ENCODE measurements at regions of chr11 and their contacts with region 1.

Region 1: DNA sequence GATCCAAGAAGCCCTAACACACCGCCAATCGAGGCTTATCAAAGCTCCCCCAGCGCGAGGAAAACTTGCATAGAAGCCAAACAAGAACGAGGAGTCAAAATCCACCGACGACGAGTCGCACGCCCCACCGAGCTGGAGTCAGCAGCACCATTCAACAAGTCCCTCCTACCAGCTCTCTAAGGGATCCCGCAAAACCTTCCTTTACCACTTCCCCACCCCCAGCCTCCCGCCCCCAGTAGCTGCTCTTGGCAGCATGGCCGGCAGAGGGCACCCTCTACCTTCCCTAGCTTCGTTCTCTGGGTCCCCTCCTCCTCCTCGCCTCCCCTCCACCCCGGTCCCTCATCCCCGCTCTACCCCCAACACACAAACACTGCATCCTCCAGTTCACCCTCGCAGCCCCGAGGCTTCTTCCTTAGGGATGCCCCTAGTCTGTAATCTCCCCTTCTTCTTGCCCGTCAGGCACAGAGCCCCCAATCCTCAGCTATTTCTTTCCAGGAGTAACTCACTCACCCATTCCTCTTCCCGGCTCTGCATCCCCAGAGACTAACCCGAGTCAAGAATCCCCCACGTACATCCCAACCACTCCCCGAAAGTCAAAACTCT is 1.3 kb downstream of the BDNF start:
- DNase-seq: peak; percentile 89 to 91
- H3K4me3 ChIP-seq: peak overlapping the region; percentile 70
- H3K4me3 Mint-ChIP-seq: peak overlapping the region; percentile 90
- H3K27ac Mint-ChIP-seq: peak overlapping the region; percentile 74
- H3K4me1 ChIP-seq: peaks cover 17% of the 10 kb centered on the region
- H3K4me1 Mint-ChIP-seq: peaks cover 20% of the 10 kb centered on the region
- H3K27me3 ChIP-seq: no peaks in the 10 kb centered on the region
- H3K27me3 Mint-ChIP-seq: no peaks in the 10 kb centered on the region
- CTCF ChIP-seq: peak; percentile 87 to 97

Region 2: GRCh38 chr11:27524155-27524554 is 174.8 kb before region 1 on chr11:
- CTCF ChIA-PET with region 1: no interaction called
- POLR2A ChIA-PET with region 1: no interaction called
- intact Hi-C with region 1: loop called (anchors 10 kb)
- DNase-seq: peak; percentile 30 to 43
- H3K4me3 ChIP-seq: no peak overlapping the region
- H3K4me3 Mint-ChIP-seq: no peak overlapping the region
- H3K27ac Mint-ChIP-seq: no peak overlapping the region
- H3K4me1 ChIP-seq: no peaks in the 10 kb centered on the region
- H3K4me1 Mint-ChIP-seq: no peaks in the 10 kb centered on the region
- H3K27me3 ChIP-seq: no peaks in the 10 kb centered on the region; the same call in 1 of the 2 replicates
- H3K27me3 Mint-ChIP-seq: peaks cover 8% of the 10 kb centered on the region
- CTCF ChIP-seq: peak; percentile 21 to 36

Region 3: DNA sequence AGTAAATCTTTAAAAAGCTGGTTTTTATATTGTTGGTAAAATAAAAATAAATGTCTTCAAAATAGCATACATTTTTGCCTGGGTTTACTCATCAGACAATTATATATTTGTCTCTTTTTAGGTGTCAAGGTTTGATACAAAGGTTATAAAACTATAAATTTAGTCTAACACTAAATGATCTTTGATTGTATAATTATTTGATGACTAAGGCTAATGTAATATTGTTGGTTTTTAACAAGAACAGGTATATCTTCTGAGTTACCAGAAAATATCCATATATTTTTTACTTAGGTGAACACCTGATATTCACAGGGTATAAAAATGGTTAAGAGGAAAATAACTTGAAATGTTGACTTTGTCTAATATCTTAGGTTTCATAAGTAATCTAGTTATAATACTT is 304.6 kb after region 1 on chr11:
- CTCF ChIA-PET with region 1: no interaction called
- POLR2A ChIA-PET with region 1: no interaction called
- intact Hi-C with region 1: no loop called
- DNase-seq: no peak
- H3K4me3 ChIP-seq: no peak overlapping the region
- H3K4me3 Mint-ChIP-seq: no peak overlapping the region
- H3K27ac Mint-ChIP-seq: no peak overlapping the region
- H3K4me1 ChIP-seq: no peaks in the 10 kb centered on the region
- H3K4me1 Mint-ChIP-seq: no peaks in the 10 kb centered on the region
- H3K27me3 ChIP-seq: no peaks in the 10 kb centered on the region
- H3K27me3 Mint-ChIP-seq: no peaks in the 10 kb centered on the region
- CTCF ChIP-seq: no peak

Region 4: DNA sequence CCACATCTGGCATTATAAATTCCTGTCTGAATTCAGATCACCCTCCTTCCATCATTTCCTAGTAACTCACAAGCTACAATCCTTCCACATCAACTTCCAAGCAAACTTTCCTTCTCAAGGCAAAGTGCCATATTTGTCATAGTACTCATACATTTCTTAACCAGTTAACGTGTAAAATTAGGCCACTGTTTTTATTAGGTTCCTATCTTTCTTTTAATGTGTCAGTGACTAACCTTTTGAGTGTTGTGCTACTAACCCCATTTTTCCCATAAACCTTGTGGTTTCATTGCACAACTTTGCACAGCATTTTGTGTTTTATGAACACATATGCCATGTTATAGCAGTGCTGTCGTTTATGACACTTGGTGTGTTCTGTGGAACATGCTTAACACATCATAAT is 318.8 kb after region 1 on chr11:
- CTCF ChIA-PET with region 1: interaction called, 3 read pairs
- POLR2A ChIA-PET with region 1: no interaction called
- intact Hi-C with region 1: loop called (anchors 5 kb)
- DNase-seq: no peak
- H3K4me3 ChIP-seq: no peak overlapping the region
- H3K4me3 Mint-ChIP-seq: no peak overlapping the region
- H3K27ac Mint-ChIP-seq: no peak overlapping the region
- H3K4me1 ChIP-seq: no peaks in the 10 kb centered on the region
- H3K4me1 Mint-ChIP-seq: no peaks in the 10 kb centered on the region
- H3K27me3 ChIP-seq: no peaks in the 10 kb centered on the region
- H3K27me3 Mint-ChIP-seq: no peaks in the 10 kb centered on the region
- CTCF ChIP-seq: no peak

Region 5: GRCh38 chr11:28529540-28530410 is 830.8 kb after region 1 on chr11:
- CTCF ChIA-PET with region 1: interaction called, 15 read pairs
- POLR2A ChIA-PET with region 1: no interaction called
- intact Hi-C with region 1: loop called (anchors 1 kb)
- DNase-seq: peak in 1 of 2 experiments; percentile 45
- H3K4me3 ChIP-seq: no peak overlapping the region
- H3K4me3 Mint-ChIP-seq: no peak overlapping the region
- H3K27ac Mint-ChIP-seq: no peak overlapping the region
- H3K4me1 ChIP-seq: no peaks in the 10 kb centered on the region
- H3K4me1 Mint-ChIP-seq: no peaks in the 10 kb centered on the region
- H3K27me3 ChIP-seq: no peaks in the 10 kb centered on the region
- H3K27me3 Mint-ChIP-seq: no peaks in the 10 kb centered on the region
- CTCF ChIP-seq: peak; percentile 39 to 47

Region 6: GRCh38 chr11:28858076-28858475 is 1159.1 kb after region 1 on chr11:
- CTCF ChIA-PET with region 1: interaction called, 10 read pairs
- POLR2A ChIA-PET with region 1: no interaction called
- intact Hi-C with region 1: no loop called
- DNase-seq: no peak
- H3K4me3 ChIP-seq: no peak overlapping the region
- H3K4me3 Mint-ChIP-seq: no peak overlapping the region
- H3K27ac Mint-ChIP-seq: no peak overlapping the region
- H3K4me1 ChIP-seq: no peaks in the 10 kb centered on the region
- H3K4me1 Mint-ChIP-seq: peaks cover 7% of the 10 kb centered on the region
- H3K27me3 ChIP-seq: no peaks in the 10 kb centered on the region
- H3K27me3 Mint-ChIP-seq: no peaks in the 10 kb centered on the region
- CTCF ChIP-seq: no peak

Region 7: DNA sequence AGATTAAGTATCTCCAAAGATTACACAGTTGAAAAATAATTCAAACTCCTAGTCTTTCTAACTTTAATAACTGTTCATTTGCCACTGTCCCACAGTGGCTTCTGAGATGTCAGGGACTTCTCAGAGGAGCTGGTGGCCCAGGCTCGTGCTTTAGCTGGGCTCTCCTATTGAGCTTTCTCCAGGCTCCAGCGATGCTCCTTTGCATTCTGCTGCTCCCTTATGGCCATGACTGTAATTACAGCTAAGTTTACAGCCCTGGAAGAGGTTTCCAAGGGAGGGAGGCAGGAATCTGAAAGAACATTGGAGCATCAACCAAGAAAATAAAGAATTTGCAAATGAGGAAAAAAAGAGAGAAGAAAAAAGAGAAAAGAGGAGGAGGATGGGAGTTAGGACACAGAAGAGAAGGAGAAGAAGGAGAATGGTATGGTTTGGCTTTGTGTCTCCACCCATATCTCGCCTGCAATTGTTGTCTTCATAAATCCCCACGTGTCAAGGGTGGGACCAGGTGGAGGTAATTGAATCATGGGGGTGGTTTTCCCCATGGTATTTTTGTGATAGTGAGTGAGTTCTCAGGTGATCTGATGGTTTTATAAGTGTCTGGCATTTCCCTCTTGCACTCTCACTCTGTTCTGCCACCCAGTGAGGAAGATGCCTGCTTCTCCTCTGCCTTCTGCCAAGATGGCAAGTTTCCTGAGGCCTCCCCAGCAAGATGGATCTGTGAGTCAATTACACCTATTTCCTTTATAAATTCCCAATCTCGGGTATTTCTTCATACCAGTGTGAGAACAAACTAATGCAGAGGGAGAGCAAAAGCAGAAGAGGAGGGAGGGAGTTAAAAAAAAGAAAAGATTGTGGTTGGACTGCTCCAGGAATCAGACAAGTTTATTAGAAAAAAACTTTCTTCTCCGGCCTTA is 1460.8 kb after region 1 on chr11:
- CTCF ChIA-PET with region 1: interaction called, 17 read pairs
- POLR2A ChIA-PET with region 1: no interaction called
- intact Hi-C with region 1: loop called (anchors 1 kb)
- DNase-seq: peak; percentile 55 to 71
- H3K4me3 ChIP-seq: no peak overlapping the region
- H3K4me3 Mint-ChIP-seq: no peak overlapping the region
- H3K27ac Mint-ChIP-seq: no peak overlapping the region
- H3K4me1 ChIP-seq: no peaks in the 10 kb centered on the region
- H3K4me1 Mint-ChIP-seq: peaks cover 7% of the 10 kb centered on the region
- H3K27me3 ChIP-seq: no peaks in the 10 kb centered on the region
- H3K27me3 Mint-ChIP-seq: no peaks in the 10 kb centered on the region
- CTCF ChIP-seq: peak; percentile 80 to 81

Measured in Caco-2 (cell line).